Mammary epithelial cell (primary cell): ENCODE measurements at regions of chr5 and their contacts with region 1.

Region 1: GRCh38 chr5:72244862-72245371 is 75.1 kb downstream of the MRPS27 start:
- DNase-seq: no peak
- H3K4me3 ChIP-seq: no peak overlapping the region
- H3K27ac ChIP-seq: no peak overlapping the region
- H3K4me1 ChIP-seq: peaks cover 11% of the 10 kb centered on the region
- H3K27me3 ChIP-seq: no peaks in the 10 kb centered on the region
- CTCF ChIP-seq: peak; percentile 45 to 63

Region 2: DNA sequence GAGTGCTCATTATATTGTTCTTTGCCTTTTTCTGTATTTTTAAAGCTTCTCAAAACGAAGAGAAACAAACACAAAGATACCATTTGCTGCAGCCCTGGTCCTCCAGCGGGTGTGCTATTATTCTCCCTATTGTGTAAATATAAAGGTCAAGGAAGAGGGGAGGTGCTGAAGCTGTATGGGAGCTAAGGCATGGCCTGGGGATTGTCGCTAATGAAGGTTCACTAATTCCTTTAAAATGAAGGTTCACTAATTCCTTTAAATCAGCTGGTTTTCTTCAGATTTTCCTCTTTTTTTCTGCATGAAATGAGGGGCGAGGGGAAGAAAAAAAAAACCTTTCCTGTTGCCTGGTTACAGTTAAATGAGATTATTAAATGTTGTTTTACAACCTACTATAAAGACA is 212.1 kb before region 1 on chr5:
- CTCF ChIA-PET with region 1: interaction called, 5 read pairs
- dilution Hi-C with region 1: no loop called
- in situ Hi-C with region 1: no loop called
- intact Hi-C with region 1: loop called (anchors 5 kb)
- DNase-seq: no peak
- H3K4me3 ChIP-seq: no peak overlapping the region
- H3K27ac ChIP-seq: no peak overlapping the region
- H3K4me1 ChIP-seq: peaks cover 23% of the 10 kb centered on the region
- H3K27me3 ChIP-seq: peaks cover 2% of the 10 kb centered on the region
- CTCF ChIP-seq: no peak